ENCODE measurements at regions of chr1 and their contacts with region 1.

Region 1: DNA sequence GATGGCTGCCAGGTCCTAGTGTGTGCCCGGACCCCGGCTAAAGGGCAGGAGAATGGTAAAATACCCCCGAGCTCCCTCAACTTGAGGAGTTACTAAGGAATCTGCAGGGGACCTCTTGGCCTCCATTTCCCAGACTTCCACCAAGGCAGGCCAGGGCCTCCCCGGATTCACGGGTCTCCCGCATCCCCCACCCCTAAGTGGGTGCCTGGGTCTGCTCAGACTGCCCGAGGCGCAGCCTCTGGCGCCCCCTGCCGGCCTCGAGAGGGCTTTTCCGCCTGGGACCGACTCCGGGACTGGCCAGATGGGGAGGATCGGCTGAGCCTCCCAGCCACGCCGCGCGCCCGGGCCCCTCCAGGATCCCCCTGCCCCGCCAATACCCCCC is 1.7 kb downstream of the PLEKHG5 start:
- DNase-seq: peak; percentile 48
- ATAC-seq: peak; percentile 73
- H3K4me3 ChIP-seq: peak overlapping the region; percentile 91 to 96
- H3K27ac ChIP-seq: peak overlapping the region; percentile 87
- H3K4me1 ChIP-seq: peaks cover 25 to 51% of the 10 kb centered on the region in 2 experiments
- H3K27me3 ChIP-seq: no peaks in the 10 kb centered on the region
- CTCF ChIP-seq: peak in 2 of 3 experiments; percentile 89 to 91; a peak in 4 of 6 replicates
- POLR2A ChIP-seq: no peak
- RAD21 ChIP-seq: no peak

Region 2: DNA sequence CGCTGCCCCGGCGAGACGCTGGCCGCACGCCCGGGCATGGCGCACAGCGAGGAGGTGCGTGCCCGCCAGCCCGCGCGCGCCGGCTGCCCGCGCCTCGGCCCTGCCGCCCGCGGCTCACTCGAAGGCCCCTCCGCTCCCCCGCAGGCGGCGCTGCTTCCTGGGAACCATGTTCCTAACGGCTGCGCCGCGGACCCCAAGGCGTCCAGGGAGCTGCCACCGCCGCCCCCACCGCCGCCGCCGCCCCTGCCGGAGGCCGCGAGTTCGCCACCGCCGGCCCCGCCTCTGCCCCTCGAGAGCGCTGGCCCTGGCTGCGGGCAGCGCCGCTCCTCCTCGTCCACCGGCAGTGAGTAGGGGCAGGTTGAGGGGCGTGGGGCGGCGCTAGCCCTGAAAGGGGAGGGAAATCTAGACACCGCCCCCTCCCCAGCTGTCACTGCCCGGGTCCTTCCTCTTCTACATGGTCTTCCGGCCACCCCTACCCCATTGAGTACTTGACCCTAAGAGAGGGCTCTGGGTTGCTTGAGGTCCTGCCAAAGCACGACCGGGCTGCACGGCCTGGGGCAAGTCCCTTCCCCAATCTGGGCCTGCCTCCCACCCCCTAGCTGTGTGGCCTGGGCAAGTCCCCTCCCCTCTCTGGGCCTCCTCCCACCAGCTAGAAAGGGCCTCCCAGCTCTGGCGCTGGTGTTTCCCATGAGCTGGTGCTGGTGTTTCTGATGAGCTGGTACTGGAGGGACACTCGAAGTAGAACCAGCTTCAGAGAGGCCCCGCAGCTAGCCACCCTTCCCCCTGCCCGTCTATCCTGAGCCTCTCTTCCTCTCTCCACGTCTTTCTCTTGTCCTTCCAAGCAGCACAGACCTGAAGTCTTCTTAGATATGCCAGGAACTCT is 40.8 kb before region 1 on chr1:
- CTCF ChIA-PET with region 1: interaction called, 11 read pairs
- POLR2A ChIA-PET with region 1: interaction called, 3 read pairs
- RAD21 ChIA-PET with region 1: no interaction called
- intact Hi-C with region 1: loop called (anchors 2 kb)
- DNase-seq: no peak
- ATAC-seq: peak; percentile 18
- H3K4me3 ChIP-seq: peak overlapping the region; percentile 59 to 69
- H3K27ac ChIP-seq: peak overlapping the region; percentile 98
- H3K4me1 ChIP-seq: peaks cover 16 to 57% of the 10 kb centered on the region in 2 experiments
- H3K27me3 ChIP-seq: no peaks in the 10 kb centered on the region
- CTCF ChIP-seq: no peak
- POLR2A ChIP-seq: no peak
- RAD21 ChIP-seq: no peak

Region 3: GRCh38 chr1:6475381-6476133 is 14.2 kb before region 1 on chr1:
- CTCF ChIA-PET with region 1: interaction called, 10 read pairs
- POLR2A ChIA-PET with region 1: interaction called, 7 read pairs
- RAD21 ChIA-PET with region 1: no interaction called
- intact Hi-C with region 1: no loop called
- DNase-seq: no peak
- ATAC-seq: peak; percentile 67
- H3K4me3 ChIP-seq: no peak overlapping the region
- H3K27ac ChIP-seq: peak overlapping the region; percentile 33; the same call in 1 of the 2 replicates
- H3K4me1 ChIP-seq: peaks cover 31 to 47% of the 10 kb centered on the region in 2 experiments
- H3K27me3 ChIP-seq: no peaks in the 10 kb centered on the region
- CTCF ChIP-seq: peak; percentile 62 to 96 (median 93); a peak in 5 of 6 replicates
- POLR2A ChIP-seq: no peak
- RAD21 ChIP-seq: no peak

Region 4: GRCh38 chr1:6523566-6523965 is 33.8 kb after region 1 on chr1:
- CTCF ChIA-PET with region 1: interaction called, 14 read pairs
- POLR2A ChIA-PET with region 1: interaction called, 6 read pairs
- RAD21 ChIA-PET with region 1: interaction called in 1 of 2 experiments, 3 read pairs
- intact Hi-C with region 1: loop called (anchors 1 kb)
- DNase-seq: peak; percentile 41
- ATAC-seq: peak; percentile 84
- H3K4me3 ChIP-seq: no peak overlapping the region
- H3K27ac ChIP-seq: peak overlapping the region; percentile 35; the same call in 1 of the 2 replicates
- H3K4me1 ChIP-seq: peaks cover 0 to 4% of the 10 kb centered on the region in 2 experiments; a peak in 1 of 4 replicates
- H3K27me3 ChIP-seq: no peaks in the 10 kb centered on the region
- CTCF ChIP-seq: peak; percentile 77 to 82 (median 78); a peak in 5 of 6 replicates
- POLR2A ChIP-seq: no peak
- RAD21 ChIP-seq: peak; percentile 79

Region 5: DNA sequence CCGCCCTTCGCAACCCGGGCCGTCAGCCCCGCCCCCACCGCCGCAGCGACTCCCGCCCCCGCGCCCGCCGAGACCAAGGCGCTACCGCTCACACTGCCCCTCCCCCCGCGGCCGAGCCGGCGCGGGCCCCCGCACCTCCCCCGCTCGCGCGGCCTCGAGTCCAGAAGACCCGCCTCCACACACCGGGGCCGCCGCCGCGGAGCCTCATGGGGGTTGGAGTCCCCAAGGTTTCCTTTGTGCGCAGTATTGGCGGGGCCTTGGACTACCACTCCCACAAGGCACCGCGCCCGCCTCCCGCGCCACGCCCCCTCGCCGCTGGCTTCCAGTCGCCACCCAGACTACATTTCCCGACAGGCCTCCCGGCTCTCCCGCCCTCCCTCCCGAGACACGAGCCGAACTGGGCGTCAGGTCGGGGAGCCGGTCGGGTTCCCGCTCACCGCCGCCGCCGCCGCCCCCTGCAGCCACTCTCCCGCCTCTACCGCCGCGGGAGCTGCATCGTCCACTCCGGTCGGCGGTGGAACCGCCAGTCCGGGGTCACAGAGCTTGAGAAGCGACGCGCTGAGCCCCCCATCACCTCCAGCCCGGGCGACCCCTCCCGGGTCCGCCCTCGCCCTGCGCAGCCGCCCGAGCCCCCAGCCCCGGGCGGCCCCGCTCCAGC is 123.7 kb after region 1 on chr1 and contains the start of gene PHF13:
- CTCF ChIA-PET with region 1: no interaction called
- POLR2A ChIA-PET with region 1: no interaction called
- RAD21 ChIA-PET with region 1: no interaction called
- intact Hi-C with region 1: no loop called
- DNase-seq: peak; percentile 97
- ATAC-seq: peak; percentile 93
- H3K4me3 ChIP-seq: peak within 1 kb of the TSS; percentile 62 to 83
- H3K27ac ChIP-seq: peak within 1 kb of the TSS; percentile 92
- H3K4me1 ChIP-seq: peaks cover 8 to 46% of the 10 kb centered on the region in 2 experiments
- H3K27me3 ChIP-seq: no peaks in the 10 kb centered on the region
- CTCF ChIP-seq: no peak
- POLR2A ChIP-seq: no peak
- RAD21 ChIP-seq: no peak
- total RNA-seq, gene PHF13: 25.8 TPM

Region 6: GRCh38 chr1:6646499-6647148 is 156.8 kb after region 1 on chr1:
- CTCF ChIA-PET with region 1: interaction called, 7 read pairs
- POLR2A ChIA-PET with region 1: no interaction called
- RAD21 ChIA-PET with region 1: no interaction called
- intact Hi-C with region 1: loop called (anchors 2 kb)
- DNase-seq: peak; percentile 19
- ATAC-seq: peak; percentile 71
- H3K4me3 ChIP-seq: no peak overlapping the region
- H3K27ac ChIP-seq: no peak overlapping the region
- H3K4me1 ChIP-seq: no peaks in the 10 kb centered on the region
- H3K27me3 ChIP-seq: no peaks in the 10 kb centered on the region
- CTCF ChIP-seq: peak; percentile 54 to 60 (median 56); a peak in 4 of 6 replicates
- POLR2A ChIP-seq: no peak
- RAD21 ChIP-seq: peak; percentile 80